Activated CD8-positive, alpha-beta T cell treated with anti-CD3 and anti-CD28 coated beads for 36 hours (primary cell): ENCODE measurements at regions of chr7 and their contacts with region 1.

Region 1: GRCh38 chr7:139431010-139431409 is 52.5 kb downstream of the KLRG2 start:
- DNase-seq: no peak
- ATAC-seq: no peak
- H3K4me3 Mint-ChIP-seq: no peak overlapping the region
- H3K27ac Mint-ChIP-seq: no peak overlapping the region
- H3K4me1 Mint-ChIP-seq: peaks cover 5% of the 10 kb centered on the region
- H3K27me3 Mint-ChIP-seq: no peaks in the 10 kb centered on the region
- CTCF ChIP-seq: no peak

Region 2: GRCh38 chr7:139075031-139075652 is 355.9 kb before region 1 on chr7:
- CTCF ChIA-PET with region 1: no interaction called
- POLR2A ChIA-PET with region 1: no interaction called
- intact Hi-C with region 1: no loop called
- DNase-seq: peak; percentile 80
- ATAC-seq: peak; percentile 70
- H3K4me3 Mint-ChIP-seq: peak overlapping the region; percentile 37
- H3K27ac Mint-ChIP-seq: peak overlapping the region; percentile 85
- H3K4me1 Mint-ChIP-seq: peaks cover 62% of the 10 kb centered on the region
- H3K27me3 Mint-ChIP-seq: no peaks in the 10 kb centered on the region
- CTCF ChIP-seq: peak; percentile 80

Region 3: DNA sequence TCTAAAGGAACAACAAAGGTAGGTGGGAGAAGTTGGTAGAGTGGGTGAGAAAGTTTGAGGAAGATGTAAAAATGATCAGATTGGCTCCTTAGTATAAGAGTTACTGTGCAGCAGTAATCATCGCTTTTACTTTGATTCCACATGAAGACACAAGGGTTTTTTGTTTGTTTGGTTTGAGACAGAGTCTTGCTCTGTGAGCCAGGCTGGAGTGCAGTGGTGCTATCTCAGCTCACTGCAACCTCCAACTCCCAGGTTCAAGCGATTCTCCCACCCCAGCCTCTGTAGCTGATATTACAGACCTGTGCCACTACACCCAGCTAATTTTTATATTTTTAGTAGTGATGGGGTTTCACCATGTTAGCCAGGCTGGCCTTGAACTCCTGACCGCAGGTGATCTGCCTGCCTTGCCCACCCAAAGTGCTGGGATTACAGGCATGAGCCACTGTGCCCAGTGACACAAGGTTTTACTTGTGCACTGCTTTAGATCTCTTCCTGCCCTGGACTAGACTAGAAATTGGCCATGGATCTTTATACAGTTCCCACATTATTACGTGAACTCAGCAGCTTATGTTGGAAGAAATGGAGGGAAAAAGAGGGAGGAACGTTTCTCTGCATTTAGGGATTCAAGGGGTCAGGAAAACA is 60.6 kb before region 1 on chr7:
- CTCF ChIA-PET with region 1: interaction called, 13 read pairs
- POLR2A ChIA-PET with region 1: no interaction called
- intact Hi-C with region 1: no loop called
- DNase-seq: no peak
- ATAC-seq: no peak
- H3K4me3 Mint-ChIP-seq: no peak overlapping the region
- H3K27ac Mint-ChIP-seq: peak overlapping the region; percentile 66
- H3K4me1 Mint-ChIP-seq: peaks cover 68% of the 10 kb centered on the region
- H3K27me3 Mint-ChIP-seq: no peaks in the 10 kb centered on the region
- CTCF ChIP-seq: no peak

Region 4: GRCh38 chr7:139416405-139416804 is 14.6 kb before region 1 on chr7:
- CTCF ChIA-PET with region 1: interaction called, 32 read pairs
- POLR2A ChIA-PET with region 1: interaction called, 5 read pairs
- intact Hi-C with region 1: no loop called
- DNase-seq: no peak
- ATAC-seq: no peak
- H3K4me3 Mint-ChIP-seq: no peak overlapping the region
- H3K27ac Mint-ChIP-seq: no peak overlapping the region
- H3K4me1 Mint-ChIP-seq: no peaks in the 10 kb centered on the region
- H3K27me3 Mint-ChIP-seq: no peaks in the 10 kb centered on the region
- CTCF ChIP-seq: no peak

Region 5: GRCh38 chr7:139450851-139451250 is 19.8 kb after region 1 on chr7:
- CTCF ChIA-PET with region 1: interaction called, 14 read pairs
- POLR2A ChIA-PET with region 1: no interaction called
- intact Hi-C with region 1: no loop called
- DNase-seq: no peak
- ATAC-seq: no peak
- H3K4me3 Mint-ChIP-seq: no peak overlapping the region
- H3K27ac Mint-ChIP-seq: no peak overlapping the region
- H3K4me1 Mint-ChIP-seq: no peaks in the 10 kb centered on the region
- H3K27me3 Mint-ChIP-seq: no peaks in the 10 kb centered on the region
- CTCF ChIP-seq: no peak

Region 6: GRCh38 chr7:139502226-139502625 is 71.2 kb after region 1 on chr7:
- CTCF ChIA-PET with region 1: interaction called, 22 read pairs
- POLR2A ChIA-PET with region 1: no interaction called
- intact Hi-C with region 1: no loop called
- DNase-seq: no peak
- ATAC-seq: no peak
- H3K4me3 Mint-ChIP-seq: no peak overlapping the region
- H3K27ac Mint-ChIP-seq: no peak overlapping the region
- H3K4me1 Mint-ChIP-seq: peaks cover 2% of the 10 kb centered on the region
- H3K27me3 Mint-ChIP-seq: peaks cover 2% of the 10 kb centered on the region
- CTCF ChIP-seq: no peak